ENCODE measurements at regions of chr5 and their contacts with region 1.

Region 1: DNA sequence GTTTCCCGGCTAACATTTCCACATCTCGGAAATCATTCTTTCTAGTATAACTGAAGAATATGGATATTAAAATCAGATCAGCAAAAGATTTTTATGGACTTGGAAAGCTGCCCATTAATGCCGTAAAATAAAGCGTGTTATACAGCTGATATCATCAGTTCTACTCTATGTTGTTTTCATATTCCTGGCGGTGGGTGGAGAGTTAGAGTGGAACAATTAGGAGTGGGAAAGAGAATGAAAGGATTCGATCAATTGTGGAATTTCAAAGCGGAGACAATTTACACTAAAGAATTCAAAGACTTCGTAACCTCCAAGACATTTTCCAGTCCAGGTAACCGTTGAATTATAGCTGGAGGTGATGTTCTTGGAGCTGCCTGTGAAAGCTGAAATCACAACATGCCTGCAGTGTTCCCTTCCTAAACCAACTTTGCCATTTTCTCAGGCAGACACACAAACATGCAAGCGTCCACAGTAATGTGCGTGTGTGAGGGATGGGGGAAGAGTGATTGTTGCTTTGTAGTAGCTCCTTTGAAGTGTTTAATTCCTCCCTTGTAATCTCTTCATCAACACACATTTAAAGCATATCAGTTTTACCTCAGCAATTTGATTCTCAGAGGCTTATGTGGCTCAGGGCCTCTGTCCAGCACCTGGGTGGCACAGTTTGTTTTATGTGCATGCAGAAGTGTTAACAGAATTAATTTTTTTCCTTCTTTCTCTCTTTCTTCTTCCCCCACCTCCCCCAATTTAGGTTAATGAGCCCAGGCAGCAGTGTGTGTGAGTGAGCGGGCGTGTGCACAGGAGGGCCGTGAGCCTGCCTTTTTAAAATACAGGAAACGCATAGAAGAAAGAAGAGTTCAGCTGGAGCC is 544.1 kb downstream of the RAB3C start:
- DNase-seq: peak in 1 of 5 donors; percentile 36
- H3K4me3 ChIP-seq: peak overlapping the region; percentile 19 to 34
- H3K4me3 Mint-ChIP-seq: no peak overlapping the region
- H3K27ac ChIP-seq: peak overlapping the region; percentile 80
- H3K27ac Mint-ChIP-seq: no peak overlapping the region
- H3K4me1 ChIP-seq: peaks cover 76% of the 10 kb centered on the region
- H3K4me1 Mint-ChIP-seq: peaks cover 0 to 17% (median 7%) of the 10 kb centered on the region in 4 donors
- H3K27me3 ChIP-seq: no peaks in the 10 kb centered on the region
- H3K27me3 Mint-ChIP-seq: no peaks in the 10 kb centered on the region

Region 2: GRCh38 chr5:59099270-59099994 is 27.5 kb before region 1 on chr5:
- CTCF ChIA-PET with region 1: interaction called, 12 read pairs
- POLR2A ChIA-PET with region 1: interaction called, 34 read pairs
- intact Hi-C with region 1: loop called (anchors 1 kb)
- DNase-seq: peak; percentile 59 to 82 (median 76)
- H3K4me3 ChIP-seq: no peak overlapping the region
- H3K4me3 Mint-ChIP-seq: peak overlapping the region in 7 of 8 donors; percentile 18 to 57 (median 49)
- H3K27ac ChIP-seq: peak overlapping the region; percentile 33
- H3K27ac Mint-ChIP-seq: peak overlapping the region; percentile 31 to 94 (median 83)
- H3K4me1 ChIP-seq: peaks cover 30% of the 10 kb centered on the region
- H3K4me1 Mint-ChIP-seq: peaks cover 15 to 42% (median 31%) of the 10 kb centered on the region in 4 donors
- H3K27me3 ChIP-seq: no peaks in the 10 kb centered on the region
- H3K27me3 Mint-ChIP-seq: no peaks in the 10 kb centered on the region

Region 3: GRCh38 chr5:59104400-59105127 is 22.4 kb before region 1 on chr5:
- CTCF ChIA-PET with region 1: interaction called, 12 read pairs
- POLR2A ChIA-PET with region 1: interaction called, 34 read pairs
- intact Hi-C with region 1: loop called (anchors 1 kb)
- DNase-seq: no peak
- H3K4me3 ChIP-seq: no peak overlapping the region
- H3K4me3 Mint-ChIP-seq: peak overlapping the region in 1 of 8 donors; percentile 2
- H3K27ac ChIP-seq: no peak overlapping the region
- H3K27ac Mint-ChIP-seq: peak overlapping the region in 3 of 7 donors; percentile 35 to 60 (median 53)
- H3K4me1 ChIP-seq: peaks cover 23% of the 10 kb centered on the region
- H3K4me1 Mint-ChIP-seq: peaks cover 13 to 42% (median 27%) of the 10 kb centered on the region in 4 donors
- H3K27me3 ChIP-seq: no peaks in the 10 kb centered on the region
- H3K27me3 Mint-ChIP-seq: no peaks in the 10 kb centered on the region

Measured in CD4-positive, alpha-beta memory T cell (primary cell).